ENCODE measurements at regions of chr1 and their contacts with region 1.

Region 1: DNA sequence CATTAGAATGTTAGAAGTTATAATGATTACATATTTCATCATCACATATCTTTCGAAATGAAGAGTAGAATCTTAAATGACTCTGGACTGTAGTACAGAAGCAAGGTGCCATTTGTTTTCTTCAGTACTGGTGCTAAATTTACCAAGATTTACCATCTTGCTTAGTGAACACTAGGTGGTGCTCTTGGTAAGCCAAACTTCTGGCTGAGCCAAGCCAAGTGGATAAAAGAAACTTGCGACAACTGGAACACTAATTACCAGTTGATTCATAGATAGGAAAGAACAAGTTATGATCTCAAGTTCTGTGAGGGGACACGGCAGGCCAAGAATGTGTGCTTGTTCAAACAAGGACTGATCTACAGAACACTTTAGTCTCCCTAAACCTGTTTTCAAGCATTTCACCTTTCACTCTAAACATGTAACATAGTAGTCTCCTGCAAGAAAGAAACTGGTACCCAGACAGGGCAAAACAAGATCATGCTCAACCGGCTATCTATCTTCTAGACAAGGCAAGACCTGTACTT is 19.8 kb downstream of the SPRTN start:
- DNase-seq: peak in 2 of 6 donors; percentile 24 to 38
- ATAC-seq: peak; percentile 73 to 97 (median 91)
- H3K4me3 ChIP-seq: no peak overlapping the region
- H3K27ac ChIP-seq: no peak overlapping the region
- H3K4me1 ChIP-seq: no peaks in the 10 kb centered on the region
- H3K27me3 ChIP-seq: no peaks in the 10 kb centered on the region
- CTCF ChIP-seq: peak; percentile 40 to 62 (median 58)

Region 2: DNA sequence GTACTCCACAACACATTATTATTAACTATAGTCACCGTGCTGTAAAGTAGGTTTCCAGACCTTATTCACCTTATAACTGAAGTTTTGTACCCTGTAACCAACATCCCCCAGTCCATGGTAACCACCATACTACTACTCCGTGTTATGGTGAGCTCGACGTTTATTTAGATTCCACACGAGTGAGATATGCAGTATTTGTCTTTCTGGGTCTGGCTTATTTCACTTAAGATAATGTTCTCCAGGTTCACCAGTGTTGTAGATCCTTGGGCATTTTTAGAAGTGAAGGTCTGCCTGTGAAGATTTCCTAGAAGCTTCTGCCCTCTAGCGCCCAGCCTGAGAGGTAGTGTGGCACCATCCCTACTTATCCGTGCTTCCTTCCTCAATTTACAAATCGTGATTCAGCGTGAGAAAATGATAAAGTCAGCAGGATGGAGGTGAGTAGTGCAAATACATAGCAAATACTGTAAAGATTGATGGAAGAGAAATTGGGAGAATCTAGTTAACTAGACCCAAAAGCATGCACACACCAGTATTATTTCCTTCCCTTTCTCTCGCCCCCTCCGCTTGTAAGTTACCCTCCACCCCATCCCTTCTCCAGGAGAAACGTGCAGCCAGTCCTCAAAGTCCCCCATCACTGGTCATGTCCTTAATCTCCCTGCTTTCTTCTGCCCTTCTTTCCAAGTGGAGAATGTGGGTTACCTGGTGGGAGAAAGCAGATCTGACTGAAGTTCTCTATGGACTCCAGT is 232.7 kb after region 1 on chr1:
- intact Hi-C with region 1: loop called in 2 of 3 experiments (anchors 5 kb)
- DNase-seq: peak in 4 of 6 donors; percentile 6 to 54 (median 34)
- ATAC-seq: peak; percentile 68 to 95 (median 94)
- H3K4me3 ChIP-seq: no peak overlapping the region
- H3K27ac ChIP-seq: no peak overlapping the region
- H3K4me1 ChIP-seq: no peaks in the 10 kb centered on the region
- H3K27me3 ChIP-seq: no peaks in the 10 kb centered on the region
- CTCF ChIP-seq: peak; percentile 17 to 55 (median 42)